MCF 10A (cell line): ENCODE measurements at regions of chr4 and their contacts with region 1.

Region 1: DNA sequence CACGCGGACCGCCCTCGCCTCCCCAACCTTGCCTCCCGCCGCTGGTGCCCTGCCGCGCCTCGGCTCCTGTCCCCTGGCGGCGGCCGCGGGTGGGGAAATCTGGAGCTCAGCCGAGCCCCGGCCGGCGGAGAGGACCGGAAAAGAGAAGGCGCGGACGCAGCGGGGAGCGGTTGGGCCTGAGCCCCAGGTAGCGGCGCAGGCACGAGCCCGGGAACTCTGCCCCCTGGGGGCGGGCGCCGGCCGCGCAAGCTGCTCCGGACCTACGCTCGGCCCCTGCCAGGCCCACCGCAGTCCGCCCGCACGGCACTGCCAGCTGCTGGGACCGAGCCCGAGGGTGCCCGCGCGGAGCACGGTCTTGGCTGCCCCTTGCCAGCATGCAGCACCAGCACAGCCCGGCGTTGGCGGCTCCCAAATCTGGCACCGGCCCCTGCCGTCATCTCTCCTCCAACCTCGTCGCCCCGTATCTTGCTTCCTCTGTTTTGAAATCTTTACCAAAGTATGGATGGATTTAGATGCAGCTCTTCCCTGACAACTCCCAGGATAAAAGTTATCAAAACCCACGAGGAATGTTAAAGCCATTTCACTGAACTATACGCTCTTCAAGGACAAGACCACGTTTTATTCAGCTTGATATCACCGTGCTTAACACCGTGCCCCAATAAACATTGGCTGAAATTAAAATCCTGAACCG is at the start of gene PRSS12:
- DNase-seq: peak; percentile 74
- H3K4me3 Mint-ChIP-seq: peak within 1 kb of the TSS; percentile 81
- H3K27ac Mint-ChIP-seq: peak within 1 kb of the TSS; percentile 82
- H3K4me1 Mint-ChIP-seq: peaks cover 20% of the 10 kb centered on the region
- H3K27me3 Mint-ChIP-seq: no peaks in the 10 kb centered on the region
- CTCF ChIP-seq: peak; percentile 59
- total RNA-seq, gene PRSS12: 8.9 and 10.7 TPM in 2 replicates

Region 2: GRCh38 chr4:117916728-117917127 is 436.3 kb before region 1 on chr4:
- CTCF ChIA-PET with region 1: no interaction called
- POLR2A ChIA-PET with region 1: no interaction called
- intact Hi-C with region 1: no loop called
- DNase-seq: no peak
- H3K4me3 Mint-ChIP-seq: no peak overlapping the region
- H3K27ac Mint-ChIP-seq: no peak overlapping the region
- H3K4me1 Mint-ChIP-seq: no peaks in the 10 kb centered on the region
- H3K27me3 Mint-ChIP-seq: no peaks in the 10 kb centered on the region
- CTCF ChIP-seq: no peak

Region 3: GRCh38 chr4:117949621-117950020 is 403.4 kb before region 1 on chr4:
- CTCF ChIA-PET with region 1: no interaction called
- POLR2A ChIA-PET with region 1: no interaction called
- intact Hi-C with region 1: no loop called
- DNase-seq: peak; percentile 8
- H3K4me3 Mint-ChIP-seq: no peak overlapping the region
- H3K27ac Mint-ChIP-seq: no peak overlapping the region
- H3K4me1 Mint-ChIP-seq: no peaks in the 10 kb centered on the region
- H3K27me3 Mint-ChIP-seq: no peaks in the 10 kb centered on the region
- CTCF ChIP-seq: no peak

Region 4: DNA sequence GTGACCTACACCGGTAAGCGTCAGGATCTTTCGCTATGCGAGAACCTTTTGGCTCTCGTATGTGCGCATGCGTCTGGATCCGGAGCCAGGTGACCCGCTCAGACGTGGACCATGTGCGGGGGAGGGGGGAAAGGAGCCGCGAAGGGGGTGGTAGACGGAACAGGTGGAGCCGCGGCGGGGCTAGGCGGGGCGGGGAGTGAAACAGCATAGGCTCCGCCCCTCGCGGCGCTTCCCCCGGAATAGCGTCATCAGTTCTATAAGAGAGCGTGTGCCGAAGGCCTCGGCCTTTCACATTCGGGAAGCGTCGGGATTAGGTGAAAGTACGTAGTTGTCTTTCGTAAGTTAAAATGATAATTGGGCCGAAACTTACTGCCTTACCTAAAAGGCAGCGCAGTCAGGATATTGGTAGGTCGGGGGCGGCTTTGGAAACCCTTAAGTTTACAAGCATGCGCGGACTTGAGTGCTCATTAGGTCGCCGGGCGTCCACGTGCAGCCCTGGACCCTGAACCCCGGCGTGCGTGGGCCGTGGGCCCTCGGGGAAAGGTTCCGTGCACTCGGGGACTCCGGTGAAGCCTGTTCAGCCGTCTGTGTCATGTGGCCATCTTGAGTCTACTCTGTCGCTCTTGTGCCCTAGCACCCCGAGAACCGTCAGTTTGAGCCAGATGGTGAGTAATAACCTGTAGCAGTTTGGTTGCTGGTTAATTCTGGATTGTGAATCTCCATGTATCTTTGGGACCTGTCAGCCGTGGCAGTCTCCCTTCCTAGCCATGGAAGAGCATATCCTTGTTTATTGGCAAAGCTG is 74.3 kb before region 1 on chr4:
- CTCF ChIA-PET with region 1: interaction called, 29 read pairs
- POLR2A ChIA-PET with region 1: interaction called, 23 read pairs
- intact Hi-C with region 1: loop called (anchors 1 kb)
- DNase-seq: peak; percentile 98
- H3K4me3 Mint-ChIP-seq: peak overlapping the region; percentile 81
- H3K27ac Mint-ChIP-seq: peak overlapping the region; percentile 99
- H3K4me1 Mint-ChIP-seq: peaks cover 25% of the 10 kb centered on the region
- H3K27me3 Mint-ChIP-seq: no peaks in the 10 kb centered on the region
- CTCF ChIP-seq: no peak

Region 5: DNA sequence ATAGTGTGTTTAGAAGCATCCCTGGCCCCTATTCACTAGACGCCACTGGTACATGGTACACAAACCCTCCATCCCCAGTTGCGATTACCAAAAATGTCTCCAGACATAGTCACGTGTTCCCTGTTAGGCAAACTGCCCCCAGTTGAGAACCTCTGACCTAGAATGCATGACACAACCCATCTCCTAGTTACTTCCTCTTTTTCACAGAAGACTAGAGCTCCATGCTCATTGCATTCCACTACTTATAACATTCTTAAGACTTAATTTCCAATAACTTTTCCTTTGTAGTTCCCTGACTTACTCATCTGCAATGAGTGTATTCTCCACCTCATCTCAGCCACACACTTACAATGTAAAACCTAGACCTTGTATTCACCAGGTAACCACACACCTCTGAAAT is 68.8 kb before region 1 on chr4:
- CTCF ChIA-PET with region 1: interaction called, 29 read pairs
- POLR2A ChIA-PET with region 1: interaction called, 23 read pairs
- intact Hi-C with region 1: loop called (anchors 1 kb)
- DNase-seq: no peak
- H3K4me3 Mint-ChIP-seq: no peak overlapping the region
- H3K27ac Mint-ChIP-seq: peak overlapping the region; percentile 11
- H3K4me1 Mint-ChIP-seq: peaks cover 41% of the 10 kb centered on the region
- H3K27me3 Mint-ChIP-seq: no peaks in the 10 kb centered on the region
- CTCF ChIP-seq: no peak

Region 6: DNA sequence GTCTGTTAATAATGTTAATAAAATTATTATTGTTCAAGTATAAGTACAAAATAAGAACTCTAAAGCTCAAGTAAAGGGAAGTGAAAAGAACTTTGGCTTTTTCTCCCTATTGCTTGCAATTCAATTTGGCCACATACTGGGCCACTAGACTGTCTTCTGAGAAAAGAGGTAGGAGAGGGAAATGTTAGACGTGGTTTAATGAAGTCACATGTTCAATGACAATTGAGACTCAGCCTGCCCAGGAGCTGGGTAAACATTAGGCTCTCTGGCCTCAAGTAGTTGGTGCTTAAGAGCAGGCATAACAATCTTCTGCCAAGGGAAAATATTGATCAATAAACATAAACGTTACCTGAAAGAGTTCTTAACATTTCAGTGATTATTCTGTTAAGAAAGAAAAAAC is 14.9 kb after region 1 on chr4:
- CTCF ChIA-PET with region 1: interaction called, 31 read pairs
- POLR2A ChIA-PET with region 1: interaction called, 4 read pairs
- intact Hi-C with region 1: no loop called
- DNase-seq: no peak
- H3K4me3 Mint-ChIP-seq: no peak overlapping the region
- H3K27ac Mint-ChIP-seq: no peak overlapping the region
- H3K4me1 Mint-ChIP-seq: no peaks in the 10 kb centered on the region
- H3K27me3 Mint-ChIP-seq: no peaks in the 10 kb centered on the region
- CTCF ChIP-seq: no peak

Region 7: GRCh38 chr4:118398226-118399090 is 45.5 kb after region 1 on chr4:
- CTCF ChIA-PET with region 1: interaction called, 11 read pairs
- POLR2A ChIA-PET with region 1: interaction called, 12 read pairs
- intact Hi-C with region 1: no loop called
- DNase-seq: peak; percentile 6
- H3K4me3 Mint-ChIP-seq: no peak overlapping the region
- H3K27ac Mint-ChIP-seq: peak overlapping the region; percentile 99
- H3K4me1 Mint-ChIP-seq: peaks cover 28% of the 10 kb centered on the region
- H3K27me3 Mint-ChIP-seq: no peaks in the 10 kb centered on the region
- CTCF ChIP-seq: no peak

Region 8: GRCh38 chr4:118410138-118410537 is 57.1 kb after region 1 on chr4:
- CTCF ChIA-PET with region 1: interaction called, 5 read pairs
- POLR2A ChIA-PET with region 1: interaction called, 12 read pairs
- intact Hi-C with region 1: no loop called
- DNase-seq: peak; percentile 41
- H3K4me3 Mint-ChIP-seq: no peak overlapping the region
- H3K27ac Mint-ChIP-seq: peak overlapping the region; percentile 3
- H3K4me1 Mint-ChIP-seq: peaks cover 7% of the 10 kb centered on the region
- H3K27me3 Mint-ChIP-seq: no peaks in the 10 kb centered on the region
- CTCF ChIP-seq: no peak

Region 9: DNA sequence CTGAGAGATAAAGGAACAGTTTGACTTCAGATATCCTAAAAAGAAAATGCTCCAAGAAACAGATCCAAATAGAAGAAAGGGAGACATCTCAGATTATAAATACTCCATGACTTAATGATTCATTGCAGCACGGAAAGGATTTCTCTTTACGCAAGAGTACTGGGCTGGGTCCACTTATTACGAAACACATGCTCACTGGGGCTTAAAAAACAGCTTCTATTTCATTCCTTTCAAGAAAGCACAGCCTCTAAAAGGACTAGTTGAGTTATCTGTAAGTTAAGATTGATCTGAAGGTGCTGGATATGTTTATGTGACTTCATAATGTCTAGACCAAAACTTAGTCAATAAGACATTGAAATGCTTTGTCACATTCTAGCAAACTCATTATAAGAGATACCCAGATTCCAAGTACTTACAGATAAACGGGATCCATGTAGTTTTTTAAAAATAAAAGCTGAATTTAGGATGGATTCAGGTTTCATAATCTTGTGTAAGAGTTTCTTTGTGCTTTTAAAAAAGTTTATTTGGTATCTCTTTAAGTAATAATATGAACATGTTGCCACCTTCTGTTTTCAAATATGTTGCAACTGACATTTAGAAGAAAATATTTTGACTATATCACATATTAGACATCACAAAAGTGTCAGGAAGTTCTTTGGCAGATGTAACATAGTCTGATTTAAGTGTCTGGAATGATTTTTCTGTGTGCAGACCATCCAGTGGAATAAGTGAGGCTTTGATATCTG is 673.1 kb after region 1 on chr4:
- CTCF ChIA-PET with region 1: no interaction called
- POLR2A ChIA-PET with region 1: no interaction called
- intact Hi-C with region 1: loop called (anchors 5 kb)
- DNase-seq: peak; percentile 88
- H3K4me3 Mint-ChIP-seq: peak overlapping the region; percentile 62
- H3K27ac Mint-ChIP-seq: peak overlapping the region; percentile 95
- H3K4me1 Mint-ChIP-seq: peaks cover 10% of the 10 kb centered on the region
- H3K27me3 Mint-ChIP-seq: no peaks in the 10 kb centered on the region
- CTCF ChIP-seq: peak; percentile 6